ENCODE measurements at regions of chr7 and their contacts with region 1.

Region 1: GRCh38 chr7:117119192-117119924 is 166.1 kb downstream of the ST7 start:
- DNase-seq: peak; percentile 69
- ATAC-seq: peak; percentile 76 to 77
- H3K4me3 ChIP-seq: no peak overlapping the region
- H3K27ac ChIP-seq: no peak overlapping the region
- H3K4me1 ChIP-seq: peaks cover 7% of the 10 kb centered on the region
- H3K27me3 ChIP-seq: no peaks in the 10 kb centered on the region
- CTCF ChIP-seq: peak; percentile 86

Region 2: DNA sequence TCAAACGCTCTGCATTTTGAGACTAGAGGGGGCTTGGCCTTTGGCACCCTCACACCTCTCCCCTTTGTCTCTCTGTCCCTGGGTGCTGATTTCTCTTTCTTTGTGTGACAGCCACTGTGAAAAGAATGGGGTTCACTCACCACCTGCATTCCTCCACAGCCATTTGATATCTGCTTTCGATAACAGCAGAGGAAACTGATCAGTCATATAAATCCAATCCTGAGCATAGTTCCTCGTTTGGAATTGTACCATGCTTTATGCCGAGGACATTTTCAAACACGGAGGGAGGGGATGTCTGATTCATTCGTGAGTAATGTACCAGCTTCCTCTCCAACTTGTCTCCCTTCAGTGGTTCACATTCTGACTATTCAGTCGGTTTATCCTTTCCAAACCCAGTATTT is 431.6 kb before region 1 on chr7:
- intact Hi-C with region 1: no loop called
- DNase-seq: no peak
- ATAC-seq: peak in 1 of 2 donors; percentile 43
- H3K4me3 ChIP-seq: no peak overlapping the region
- H3K27ac ChIP-seq: no peak overlapping the region
- H3K4me1 ChIP-seq: no peaks in the 10 kb centered on the region
- H3K27me3 ChIP-seq: no peaks in the 10 kb centered on the region
- CTCF ChIP-seq: no peak

Region 3: GRCh38 chr7:116929914-116930913 is 189.1 kb before region 1 on chr7:
- intact Hi-C with region 1: loop called (anchors 10 kb)
- DNase-seq: peak; percentile 87
- ATAC-seq: peak; percentile 91 to 93
- H3K4me3 ChIP-seq: no peak overlapping the region
- H3K27ac ChIP-seq: no peak overlapping the region
- H3K4me1 ChIP-seq: no peaks in the 10 kb centered on the region
- H3K27me3 ChIP-seq: no peaks in the 10 kb centered on the region
- CTCF ChIP-seq: peak; percentile 94

Region 4: DNA sequence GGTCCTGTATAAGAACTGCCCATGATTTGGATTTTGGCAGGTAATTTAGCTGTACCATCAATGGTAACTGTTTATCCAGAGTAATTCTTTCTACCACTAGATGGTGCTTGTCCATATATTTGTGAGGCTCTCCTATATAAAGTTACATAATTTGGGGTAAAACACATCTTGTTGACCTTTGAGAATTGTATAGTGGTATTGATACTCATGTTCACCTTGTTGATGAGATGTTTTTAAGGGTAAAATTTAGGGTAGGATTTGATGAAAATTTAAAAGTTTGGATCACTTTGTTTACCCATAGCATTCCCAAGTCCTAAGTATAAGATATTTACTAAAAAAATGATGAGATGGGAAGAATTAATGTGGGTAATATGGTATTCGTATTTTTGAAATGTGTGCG is 134.4 kb before region 1 on chr7:
- intact Hi-C with region 1: loop called (anchors 5 kb)
- DNase-seq: no peak
- ATAC-seq: peak; percentile 43 to 64
- H3K4me3 ChIP-seq: no peak overlapping the region
- H3K27ac ChIP-seq: no peak overlapping the region
- H3K4me1 ChIP-seq: no peaks in the 10 kb centered on the region
- H3K27me3 ChIP-seq: no peaks in the 10 kb centered on the region
- CTCF ChIP-seq: peak; percentile 63